ENCODE measurements at regions of chr1 and their contacts with region 1.

Region 1: GRCh38 chr1:209627732-209628196 is 24.5 kb downstream of the LAMB3 start:
- DNase-seq: peak; percentile 77
- H3K4me3 ChIP-seq: peak overlapping the region; percentile 30
- H3K27ac ChIP-seq: peak overlapping the region; percentile 50
- H3K4me1 ChIP-seq: peaks cover 63% of the 10 kb centered on the region
- H3K27me3 ChIP-seq: no peaks in the 10 kb centered on the region
- CTCF ChIP-seq: peak; percentile 98

Region 2: GRCh38 chr1:209585672-209586071 is 42.1 kb before region 1 on chr1:
- intact Hi-C with region 1: loop called (anchors 5 kb)
- DNase-seq: peak; percentile 55
- H3K4me3 ChIP-seq: peak overlapping the region; percentile 27
- H3K27ac ChIP-seq: no peak overlapping the region
- H3K4me1 ChIP-seq: peaks cover 13% of the 10 kb centered on the region
- H3K27me3 ChIP-seq: peaks cover 51% of the 10 kb centered on the region
- CTCF ChIP-seq: peak; percentile 30